ENCODE measurements at regions of chr2 and their contacts with region 1.

Region 1: DNA sequence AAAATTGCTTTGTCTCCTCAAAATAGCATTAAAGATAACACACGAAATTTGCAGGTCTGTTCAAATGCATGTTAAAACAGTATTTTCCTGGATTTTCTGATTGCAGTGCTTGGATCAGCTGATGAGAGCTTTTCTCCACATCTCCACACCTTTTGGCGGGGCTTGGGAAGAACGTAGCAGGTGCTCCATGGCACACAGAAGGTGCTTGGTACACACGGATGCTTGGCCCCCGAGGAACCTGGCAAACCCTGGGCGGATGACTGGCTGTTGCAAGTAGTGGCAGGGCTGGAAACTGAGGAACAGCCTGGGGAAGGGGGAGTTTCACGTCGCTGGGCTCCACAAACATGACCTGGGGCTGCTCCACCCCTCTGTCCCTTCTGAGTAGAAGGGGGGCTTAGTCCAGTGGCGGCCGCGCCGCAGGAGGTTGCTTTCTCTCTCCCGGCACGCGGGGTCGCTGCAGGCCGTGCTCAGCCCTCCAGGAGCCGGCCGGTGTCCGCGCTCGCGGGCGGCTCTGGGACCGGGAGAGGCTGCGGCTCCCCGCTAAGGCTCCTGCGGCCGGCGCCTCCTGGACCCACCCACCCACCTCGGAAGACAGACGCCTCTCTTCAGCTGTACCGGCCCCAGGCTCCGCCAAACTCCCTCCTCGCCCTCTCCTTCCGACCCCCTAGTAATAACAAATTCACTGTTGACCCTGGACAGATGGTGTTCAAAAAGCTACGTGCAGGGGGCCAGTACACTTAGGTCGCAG is 69.3 kb downstream of the MARCO start:
- DNase-seq: peak; percentile 36 to 72 (median 48)
- ATAC-seq: peak; percentile 75 to 96 (median 90)
- H3K4me3 ChIP-seq: peak overlapping the region in 2 of 12 donors; percentile 9 to 21
- H3K27ac ChIP-seq: no peak overlapping the region
- H3K4me1 ChIP-seq: no peaks in the 10 kb centered on the region
- H3K27me3 ChIP-seq: peaks cover 0 to 53% (median 17%) of the 10 kb centered on the region in 9 donors
- CTCF ChIP-seq: peak; percentile 42 to 72 (median 62)
- POLR2A ChIP-seq: no peak

Region 2: GRCh38 chr2:118882709-118883210 is 128.6 kb before region 1 on chr2:
- intact Hi-C with region 1: loop called in 2 of 10 experiments (anchors 10 kb)
- DNase-seq: peak; percentile 26 to 70 (median 56)
- ATAC-seq: peak in 3 of 4 donors; percentile 83 to 88 (median 85)
- H3K4me3 ChIP-seq: peak overlapping the region in 4 of 12 donors; percentile 9 to 48 (median 22)
- H3K27ac ChIP-seq: no peak overlapping the region
- H3K4me1 ChIP-seq: peaks cover 0 to 6% (median 0%) of the 10 kb centered on the region in 12 donors
- H3K27me3 ChIP-seq: peaks cover 0 to 52% (median 13%) of the 10 kb centered on the region in 9 donors
- CTCF ChIP-seq: peak; percentile 64 to 91 (median 76)
- POLR2A ChIP-seq: no peak

Region 3: GRCh38 chr2:119174216-119175037 is 163.1 kb after region 1 on chr2:
- intact Hi-C with region 1: loop called in 6 of 10 experiments (anchors 5 to 10 kb)
- DNase-seq: peak in 2 of 5 donors; percentile 31 to 34
- ATAC-seq: peak in 3 of 4 donors; percentile 51 to 64 (median 54)
- H3K4me3 ChIP-seq: no peak overlapping the region
- H3K27ac ChIP-seq: no peak overlapping the region
- H3K4me1 ChIP-seq: peaks cover 0 to 4% (median 0%) of the 10 kb centered on the region in 12 donors
- H3K27me3 ChIP-seq: peaks cover 0 to 9% (median 0%) of the 10 kb centered on the region in 9 donors
- CTCF ChIP-seq: peak; percentile 52 to 79 (median 64)
- POLR2A ChIP-seq: no peak

Region 4: DNA sequence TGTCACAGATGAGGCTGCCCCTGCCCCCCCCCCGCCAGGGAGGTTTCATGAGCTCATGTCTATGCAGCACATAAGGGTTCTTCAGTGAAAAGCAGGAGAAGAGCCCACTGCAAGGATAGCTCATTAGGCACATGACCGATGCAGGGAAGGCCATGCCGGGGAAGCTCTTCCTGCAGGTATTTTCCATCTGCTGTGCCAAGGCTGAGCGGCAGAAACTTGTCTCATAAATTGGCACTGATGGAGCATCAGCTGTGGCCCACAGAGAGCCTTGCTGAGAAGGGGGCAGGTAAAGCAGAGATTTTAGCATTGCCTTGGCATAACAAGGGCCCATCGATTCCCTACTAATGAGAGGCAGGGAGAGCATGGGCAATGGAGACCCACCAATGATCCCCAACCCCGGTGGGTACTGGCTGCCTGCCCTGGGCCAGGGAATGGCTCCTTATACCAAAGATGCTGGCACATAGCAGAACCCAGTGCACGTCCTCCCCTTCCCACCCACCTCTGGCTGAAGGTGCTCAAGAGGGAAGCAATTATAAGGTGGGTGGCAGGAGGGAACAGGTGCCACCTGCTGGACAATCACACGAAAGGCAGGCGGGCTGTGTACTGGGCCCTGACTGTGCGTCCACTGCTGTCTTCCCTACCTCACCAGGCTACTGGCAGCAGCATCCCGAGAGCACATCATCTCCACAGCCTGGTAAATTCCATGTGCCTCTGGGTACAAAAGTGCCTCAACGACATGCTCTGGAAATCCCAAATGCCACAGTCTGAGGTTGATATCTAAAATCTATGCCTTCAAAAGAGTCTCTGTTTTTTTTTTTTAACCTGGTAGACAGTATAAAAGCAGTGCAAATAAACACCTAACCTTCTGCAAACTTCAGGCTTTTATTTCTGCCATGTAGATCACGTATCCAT is 253.7 kb after region 1 on chr2:
- intact Hi-C with region 1: loop called in 6 of 10 experiments (anchors 1 to 10 kb)
- DNase-seq: peak in 2 of 5 donors; percentile 33 to 37
- ATAC-seq: peak; percentile 42 to 87 (median 82)
- H3K4me3 ChIP-seq: no peak overlapping the region
- H3K27ac ChIP-seq: no peak overlapping the region
- H3K4me1 ChIP-seq: peaks cover 0 to 17% (median 0%) of the 10 kb centered on the region in 12 donors
- H3K27me3 ChIP-seq: no peaks in the 10 kb centered on the region
- CTCF ChIP-seq: peak; percentile 52 to 82 (median 70)
- POLR2A ChIP-seq: no peak

Region 5: GRCh38 chr2:119290859-119291587 is 279.7 kb after region 1 on chr2:
- intact Hi-C with region 1: loop called (anchors 2 to 10 kb)
- DNase-seq: peak; percentile 68 to 93 (median 89)
- ATAC-seq: peak; percentile 29 to 95 (median 90)
- H3K4me3 ChIP-seq: no peak overlapping the region
- H3K27ac ChIP-seq: no peak overlapping the region
- H3K4me1 ChIP-seq: peaks cover 0 to 15% (median 7%) of the 10 kb centered on the region in 12 donors
- H3K27me3 ChIP-seq: no peaks in the 10 kb centered on the region
- CTCF ChIP-seq: peak; percentile 49 to 97 (median 92)
- POLR2A ChIP-seq: no peak